ENCODE measurements at regions of chr6 and their contacts with region 1.

Region 1: DNA sequence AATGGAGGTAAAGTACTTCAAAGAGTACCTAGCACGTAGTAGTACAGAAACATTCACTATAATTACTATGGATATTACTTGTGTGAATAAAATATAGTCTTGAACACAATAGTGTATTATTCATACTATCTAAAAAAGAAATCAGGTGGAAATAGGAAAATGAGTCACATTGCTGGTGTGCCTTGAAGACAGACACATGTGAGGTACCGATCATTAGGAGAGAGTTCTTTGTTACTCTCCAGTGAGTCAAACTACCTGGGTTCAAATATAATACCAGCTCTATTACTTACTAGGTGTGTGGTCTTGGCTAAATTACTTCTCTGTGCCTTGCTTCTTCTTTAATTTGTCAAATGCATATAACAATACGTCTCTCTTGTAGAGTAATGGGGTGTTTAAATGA is 50.8 kb upstream of the BEND6 start:
- DNase-seq: no peak
- H3K4me3 Mint-ChIP-seq: no peak overlapping the region
- H3K27ac Mint-ChIP-seq: no peak overlapping the region
- H3K4me1 Mint-ChIP-seq: no peaks in the 10 kb centered on the region
- H3K27me3 Mint-ChIP-seq: peaks cover 22% of the 10 kb centered on the region

Region 2: GRCh38 chr6:56922645-56923044 is 18.6 kb after region 1 on chr6:
- intact Hi-C with region 1: no loop called
- DNase-seq: no peak
- H3K4me3 Mint-ChIP-seq: no peak overlapping the region
- H3K27ac Mint-ChIP-seq: no peak overlapping the region
- H3K4me1 Mint-ChIP-seq: no peaks in the 10 kb centered on the region
- H3K27me3 Mint-ChIP-seq: peaks cover 33% of the 10 kb centered on the region

Region 3: GRCh38 chr6:57006131-57006737 is 102.2 kb after region 1 on chr6:
- intact Hi-C with region 1: no loop called
- DNase-seq: no peak
- H3K4me3 Mint-ChIP-seq: no peak overlapping the region
- H3K27ac Mint-ChIP-seq: no peak overlapping the region
- H3K4me1 Mint-ChIP-seq: no peaks in the 10 kb centered on the region
- H3K27me3 Mint-ChIP-seq: peaks cover 14% of the 10 kb centered on the region

Region 4: GRCh38 chr6:57021086-57021720 is 117.1 kb after region 1 on chr6:
- intact Hi-C with region 1: loop called (anchors 1 kb)
- DNase-seq: no peak
- H3K4me3 Mint-ChIP-seq: no peak overlapping the region
- H3K27ac Mint-ChIP-seq: no peak overlapping the region
- H3K4me1 Mint-ChIP-seq: no peaks in the 10 kb centered on the region
- H3K27me3 Mint-ChIP-seq: peaks cover 22% of the 10 kb centered on the region

Region 5: DNA sequence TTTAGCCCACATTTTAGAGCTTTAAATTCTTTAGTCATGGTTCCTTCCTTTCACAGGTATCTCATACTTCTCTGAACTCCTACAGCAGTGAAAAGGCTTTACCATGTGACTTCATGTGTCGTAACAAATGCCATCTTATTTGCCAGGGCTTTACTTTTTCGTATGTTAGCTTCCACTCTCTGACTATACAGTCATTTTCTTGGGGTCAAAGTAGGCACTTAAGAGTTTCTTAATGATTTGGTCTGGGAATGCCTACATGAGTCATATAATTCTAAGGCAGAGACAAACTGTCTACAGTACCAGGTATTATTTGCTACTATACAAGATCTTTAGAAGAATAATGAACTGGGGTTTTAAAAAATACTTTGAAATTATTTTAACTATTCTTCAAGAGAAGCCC is 303.1 kb after region 1 on chr6:
- intact Hi-C with region 1: no loop called
- DNase-seq: no peak
- H3K4me3 Mint-ChIP-seq: no peak overlapping the region
- H3K27ac Mint-ChIP-seq: no peak overlapping the region
- H3K4me1 Mint-ChIP-seq: peaks cover 27% of the 10 kb centered on the region
- H3K27me3 Mint-ChIP-seq: no peaks in the 10 kb centered on the region

Measured in activated T-helper 2 cell treated with anti-CD3 and anti-CD28 coated beads, Interferon-gamma antibody, Interleukin-2, Interleukin-4, amounts not matched to agents 10 μg/mL and 5 μg/mL and 100 μg/mL, durations not matched to agents 14 hours and 24 hours and 36 hours (primary cell).